CD4-positive, alpha-beta T cell (primary cell): ENCODE measurements at regions of chr9 and their contacts with region 1.

Region 1: DNA sequence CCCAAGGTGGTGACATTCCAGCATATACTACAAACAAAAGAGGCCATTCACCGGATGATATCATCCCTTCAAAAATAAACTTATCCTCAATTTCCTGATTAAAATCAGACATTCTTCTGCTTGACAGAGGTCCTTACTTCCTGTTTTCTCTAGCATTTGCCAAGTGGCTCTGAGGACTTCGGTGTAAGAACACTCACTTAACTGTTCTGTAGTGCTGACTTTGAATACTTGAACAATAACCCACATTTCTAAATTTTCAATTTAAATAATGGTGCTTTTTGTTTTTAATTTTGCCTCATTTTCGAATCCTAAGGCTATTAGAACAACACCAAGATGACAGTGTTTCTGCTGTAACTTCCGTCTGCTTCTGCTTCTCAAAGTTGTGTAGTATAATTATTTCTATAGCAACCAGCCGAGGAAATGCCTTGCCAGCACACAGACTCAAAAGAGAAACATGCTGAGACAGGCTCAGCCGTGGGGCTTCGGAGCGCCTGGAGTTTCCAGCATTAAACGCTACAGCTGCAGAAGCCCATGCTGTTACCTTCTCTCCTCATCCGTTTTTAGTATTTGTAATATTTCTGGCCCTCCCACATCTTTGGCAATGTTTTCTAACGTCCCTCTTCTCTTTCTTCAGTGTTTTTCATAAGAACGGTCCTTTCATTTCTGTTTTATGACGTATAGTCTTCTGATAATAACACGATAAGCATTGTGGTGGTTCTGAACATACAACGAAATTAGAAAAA is 19.5 kb upstream of the ANXA1 start:
- DNase-seq: peak; percentile 37 to 94 (median 70)
- ATAC-seq: peak; percentile 90
- H3K4me3 ChIP-seq: peak overlapping the region; percentile 72
- H3K4me3 Mint-ChIP-seq: peak overlapping the region; percentile 86
- H3K27ac ChIP-seq: peak overlapping the region; percentile 71 to 97
- H3K27ac Mint-ChIP-seq: peak overlapping the region; percentile 88
- H3K4me1 ChIP-seq: peaks cover 3% of the 10 kb centered on the region
- H3K4me1 Mint-ChIP-seq: peaks cover 35% of the 10 kb centered on the region
- H3K27me3 ChIP-seq: no peaks in the 10 kb centered on the region
- H3K27me3 Mint-ChIP-seq: no peaks in the 10 kb centered on the region
- CTCF ChIP-seq: no peak

Region 2: DNA sequence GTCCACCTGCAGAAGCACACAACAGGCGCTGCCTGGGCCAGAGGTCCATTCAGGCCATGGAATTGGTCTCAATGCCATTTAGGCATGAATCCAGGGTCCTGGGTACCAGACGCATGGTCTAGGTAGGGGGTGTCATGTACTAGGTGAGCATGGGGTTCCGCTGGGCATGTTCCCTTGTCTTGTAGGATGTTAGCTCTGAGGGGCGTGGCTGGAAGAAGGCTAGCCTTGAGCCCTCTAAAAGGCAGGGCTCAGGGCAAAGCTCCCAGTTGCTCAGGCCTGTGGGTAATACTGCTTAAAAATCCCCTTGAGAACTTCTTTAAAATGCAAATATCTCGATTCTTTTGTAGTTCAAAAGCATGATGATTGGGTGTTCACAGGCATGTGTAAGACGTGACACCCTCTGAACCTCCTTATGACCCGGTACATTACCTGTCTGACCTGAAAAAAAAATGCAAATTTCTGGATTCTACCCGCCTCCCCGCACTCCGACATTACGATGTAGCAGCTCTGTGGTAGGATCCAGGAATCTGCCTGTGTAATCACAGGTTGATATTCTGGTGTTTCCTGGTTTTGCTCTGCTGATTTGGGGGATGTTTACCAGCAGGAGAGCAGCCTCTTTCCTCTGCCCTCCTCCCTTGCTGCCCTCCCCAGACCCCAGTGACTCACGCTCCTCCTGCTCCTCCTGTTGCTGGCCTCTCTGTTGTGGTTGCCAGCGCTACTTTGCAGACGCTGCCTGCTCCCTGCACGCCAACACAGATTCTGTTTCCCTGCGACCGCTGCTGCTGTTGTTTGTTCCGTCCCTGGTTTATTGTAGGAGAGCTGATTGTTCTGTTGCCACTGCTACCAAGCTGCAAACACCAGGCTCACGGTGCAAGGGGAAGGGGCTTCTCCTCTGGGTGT is 605.1 kb before region 1 on chr9:
- CTCF ChIA-PET with region 1: no interaction called
- POLR2A ChIA-PET with region 1: no interaction called
- intact Hi-C with region 1: loop called in 1 of 2 experiments (anchors 5 kb)
- DNase-seq: peak; percentile 58 to 91 (median 80)
- ATAC-seq: peak; percentile 85
- H3K4me3 ChIP-seq: peak overlapping the region; percentile 47
- H3K4me3 Mint-ChIP-seq: peak overlapping the region; percentile 84
- H3K27ac ChIP-seq: peak overlapping the region; percentile 59 to 63
- H3K27ac Mint-ChIP-seq: peak overlapping the region; percentile 84
- H3K4me1 ChIP-seq: peaks cover 25% of the 10 kb centered on the region
- H3K4me1 Mint-ChIP-seq: peaks cover 31% of the 10 kb centered on the region
- H3K27me3 ChIP-seq: no peaks in the 10 kb centered on the region
- H3K27me3 Mint-ChIP-seq: no peaks in the 10 kb centered on the region
- CTCF ChIP-seq: no peak

Region 3: GRCh38 chr9:72812559-72813111 is 319.6 kb before region 1 on chr9:
- CTCF ChIA-PET with region 1: no interaction called
- POLR2A ChIA-PET with region 1: no interaction called
- intact Hi-C with region 1: no loop called
- DNase-seq: no peak
- ATAC-seq: no peak
- H3K4me3 ChIP-seq: no peak overlapping the region
- H3K4me3 Mint-ChIP-seq: no peak overlapping the region
- H3K27ac ChIP-seq: no peak overlapping the region
- H3K27ac Mint-ChIP-seq: no peak overlapping the region
- H3K4me1 ChIP-seq: no peaks in the 10 kb centered on the region
- H3K4me1 Mint-ChIP-seq: no peaks in the 10 kb centered on the region
- H3K27me3 ChIP-seq: no peaks in the 10 kb centered on the region
- H3K27me3 Mint-ChIP-seq: no peaks in the 10 kb centered on the region
- CTCF ChIP-seq: no peak

Region 4: DNA sequence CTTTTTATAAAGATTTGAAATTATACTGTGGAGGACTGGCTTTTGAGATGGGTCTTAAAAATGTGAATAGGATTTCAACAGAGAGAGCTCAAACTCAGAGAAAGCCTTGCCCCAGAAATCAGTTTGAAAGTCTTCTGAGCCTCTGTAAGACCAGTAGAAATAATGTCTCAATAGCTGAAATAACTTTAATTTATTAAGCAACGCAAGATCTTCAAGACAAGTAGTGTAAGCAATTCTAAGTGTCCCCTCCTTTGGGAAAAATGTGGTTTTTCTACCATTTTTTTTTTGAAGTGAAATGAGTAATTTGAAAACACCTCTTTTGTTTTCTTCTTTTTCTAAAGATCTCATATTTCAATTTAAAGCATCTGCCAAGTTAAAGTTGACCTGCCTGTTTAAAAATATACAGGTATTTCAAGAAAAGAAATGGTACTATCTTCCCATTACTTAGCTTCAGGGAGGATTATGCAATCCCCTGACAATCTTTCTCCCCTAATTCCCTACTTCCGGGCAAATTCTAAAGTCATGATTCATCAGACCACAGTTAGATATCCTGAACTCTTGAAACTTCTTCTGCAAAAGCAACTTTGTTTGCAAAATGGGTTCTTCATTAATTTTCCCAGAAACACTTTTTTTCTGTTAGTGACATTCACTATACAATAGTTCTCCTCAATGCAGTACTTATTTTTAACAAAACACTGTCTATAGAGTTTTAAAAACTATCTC is 11.6 kb after region 1 on chr9:
- CTCF ChIA-PET with region 1: interaction called, 16 read pairs
- POLR2A ChIA-PET with region 1: interaction called, 7 read pairs
- intact Hi-C with region 1: no loop called
- DNase-seq: no peak
- ATAC-seq: no peak
- H3K4me3 ChIP-seq: no peak overlapping the region
- H3K4me3 Mint-ChIP-seq: no peak overlapping the region
- H3K27ac ChIP-seq: no peak overlapping the region
- H3K27ac Mint-ChIP-seq: no peak overlapping the region
- H3K4me1 ChIP-seq: no peaks in the 10 kb centered on the region
- H3K4me1 Mint-ChIP-seq: peaks cover 20% of the 10 kb centered on the region
- H3K27me3 ChIP-seq: no peaks in the 10 kb centered on the region
- H3K27me3 Mint-ChIP-seq: no peaks in the 10 kb centered on the region
- CTCF ChIP-seq: no peak

Region 5: GRCh38 chr9:73154760-73155159 is 22.6 kb after region 1 on chr9:
- CTCF ChIA-PET with region 1: interaction called, 4 read pairs
- POLR2A ChIA-PET with region 1: interaction called, 22 read pairs
- intact Hi-C with region 1: loop called in 1 of 2 experiments (anchors 1 kb)
- DNase-seq: peak in 3 of 14 experiments; percentile 66 to 81 (median 68)
- ATAC-seq: peak; percentile 43
- H3K4me3 ChIP-seq: peak overlapping the region; percentile 68
- H3K4me3 Mint-ChIP-seq: peak overlapping the region; percentile 88
- H3K27ac ChIP-seq: peak overlapping the region; percentile 79 to 83
- H3K27ac Mint-ChIP-seq: peak overlapping the region; percentile 87
- H3K4me1 ChIP-seq: peaks cover 25% of the 10 kb centered on the region
- H3K4me1 Mint-ChIP-seq: peaks cover 87% of the 10 kb centered on the region
- H3K27me3 ChIP-seq: no peaks in the 10 kb centered on the region
- H3K27me3 Mint-ChIP-seq: no peaks in the 10 kb centered on the region
- CTCF ChIP-seq: no peak